ENCODE measurements at regions of chr2 and their contacts with region 1.

Region 1: DNA sequence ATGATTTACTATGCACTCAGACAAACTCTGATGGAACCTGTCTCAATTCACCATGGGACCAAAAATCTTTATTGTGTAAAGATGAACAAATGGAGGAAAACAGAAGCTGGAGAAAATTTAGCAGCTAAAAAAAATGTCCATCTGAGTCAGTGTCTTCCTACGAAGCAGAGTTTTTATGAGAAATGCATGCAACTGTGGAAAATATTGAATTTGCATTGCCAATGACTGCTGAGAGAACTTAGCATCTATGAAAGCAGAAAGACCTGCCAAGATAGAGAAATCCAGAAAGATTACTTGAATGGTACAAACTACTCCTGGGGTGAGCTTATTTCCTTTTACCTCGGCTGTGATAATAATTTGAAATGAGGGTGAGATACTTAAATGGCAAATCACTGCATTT is 289.7 kb upstream of the GCFC2 start:
- DNase-seq: no peak
- H3K4me3 ChIP-seq: no peak overlapping the region
- H3K27ac ChIP-seq: no peak overlapping the region
- H3K4me1 ChIP-seq: no peaks in the 10 kb centered on the region
- H3K27me3 ChIP-seq: no peaks in the 10 kb centered on the region
- CTCF ChIP-seq: no peak
- POLR2A ChIP-seq: no peak

Region 2: GRCh38 chr2:75608684-75609333 is 391.6 kb before region 1 on chr2:
- intact Hi-C with region 1: loop called (anchors 5 kb)
- DNase-seq: peak; percentile 52 to 61
- H3K4me3 ChIP-seq: peak overlapping the region in 2 of 3 donors; percentile 32 to 46
- H3K27ac ChIP-seq: no peak overlapping the region
- H3K4me1 ChIP-seq: no peaks in the 10 kb centered on the region
- H3K27me3 ChIP-seq: no peaks in the 10 kb centered on the region
- CTCF ChIP-seq: peak; percentile 76 to 90 (median 81)
- POLR2A ChIP-seq: no peak

Region 3: DNA sequence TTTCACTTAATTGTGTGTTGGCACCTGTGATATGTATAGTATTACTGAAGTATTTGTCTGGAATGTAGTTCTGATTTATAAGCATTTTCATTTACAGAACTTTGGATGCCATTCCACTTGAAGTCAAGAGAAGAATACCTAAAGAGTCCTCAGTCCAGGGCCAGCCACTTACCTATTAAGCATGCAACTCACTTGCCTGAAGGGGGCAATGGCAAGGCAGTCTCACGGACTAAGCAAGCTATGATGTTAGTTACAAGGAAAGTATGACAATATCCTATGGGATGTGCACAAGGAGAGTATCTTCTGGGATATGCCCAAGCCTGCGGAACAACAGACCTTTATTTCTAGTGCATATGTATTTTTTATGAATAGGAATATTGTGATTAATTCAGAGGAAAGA is 79.7 kb after region 1 on chr2:
- intact Hi-C with region 1: no loop called
- DNase-seq: no peak
- H3K4me3 ChIP-seq: no peak overlapping the region
- H3K27ac ChIP-seq: no peak overlapping the region
- H3K4me1 ChIP-seq: no peaks in the 10 kb centered on the region
- H3K27me3 ChIP-seq: no peaks in the 10 kb centered on the region
- CTCF ChIP-seq: no peak
- POLR2A ChIP-seq: no peak

Measured in breast epithelium (tissue), 4 donors.